ENCODE measurements at regions of chr3 and their contacts with region 1.

Region 1: DNA sequence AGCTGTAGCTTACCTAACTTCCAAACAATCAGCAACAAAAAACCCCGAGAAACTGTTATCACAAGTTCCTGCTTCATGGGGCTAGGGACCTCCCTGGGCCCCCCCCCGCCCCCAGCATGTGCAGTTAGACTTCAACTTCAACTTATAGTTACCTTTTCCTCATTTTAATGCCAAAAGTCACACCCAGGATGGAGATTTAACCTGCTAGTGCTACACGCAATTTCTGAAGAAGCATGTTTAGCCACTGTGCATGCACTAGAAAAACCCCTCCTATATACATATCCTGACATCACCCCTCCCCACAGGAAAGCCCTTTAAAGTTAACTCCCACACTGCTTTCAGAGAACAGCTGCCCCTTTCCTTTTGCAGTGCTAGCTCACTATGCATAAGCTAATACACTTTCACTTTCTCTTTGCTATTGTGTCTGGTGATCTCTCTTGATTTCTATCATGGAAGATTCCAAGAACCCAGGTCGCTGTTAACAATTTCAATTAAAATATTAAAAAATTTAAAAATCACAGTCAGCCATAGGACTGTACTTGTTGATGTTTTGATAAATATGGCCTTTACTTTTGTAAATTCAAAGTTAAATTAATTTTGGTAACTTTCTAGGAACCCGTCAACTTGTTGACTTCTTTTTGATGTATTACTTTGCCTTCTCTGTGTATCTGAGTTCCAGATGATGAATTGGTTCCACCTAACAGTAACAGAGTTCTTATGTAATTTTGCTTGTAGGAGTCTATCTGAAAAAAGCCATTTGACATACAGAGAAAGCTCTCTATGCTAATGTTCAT is 75.2 kb upstream of the ACAD9 start:
- DNase-seq: peak in 11 of 14 experiments; percentile 26 to 93 (median 44)
- ATAC-seq: peak; percentile 92
- H3K4me3 ChIP-seq: peak overlapping the region; percentile 44
- H3K4me3 Mint-ChIP-seq: peak overlapping the region; percentile 75
- H3K27ac ChIP-seq: peak overlapping the region; percentile 86 to 87
- H3K27ac Mint-ChIP-seq: peak overlapping the region; percentile 96
- H3K4me1 ChIP-seq: peaks cover 50% of the 10 kb centered on the region
- H3K4me1 Mint-ChIP-seq: peaks cover 81% of the 10 kb centered on the region
- H3K27me3 ChIP-seq: no peaks in the 10 kb centered on the region
- H3K27me3 Mint-ChIP-seq: no peaks in the 10 kb centered on the region
- CTCF ChIP-seq: no peak

Region 2: DNA sequence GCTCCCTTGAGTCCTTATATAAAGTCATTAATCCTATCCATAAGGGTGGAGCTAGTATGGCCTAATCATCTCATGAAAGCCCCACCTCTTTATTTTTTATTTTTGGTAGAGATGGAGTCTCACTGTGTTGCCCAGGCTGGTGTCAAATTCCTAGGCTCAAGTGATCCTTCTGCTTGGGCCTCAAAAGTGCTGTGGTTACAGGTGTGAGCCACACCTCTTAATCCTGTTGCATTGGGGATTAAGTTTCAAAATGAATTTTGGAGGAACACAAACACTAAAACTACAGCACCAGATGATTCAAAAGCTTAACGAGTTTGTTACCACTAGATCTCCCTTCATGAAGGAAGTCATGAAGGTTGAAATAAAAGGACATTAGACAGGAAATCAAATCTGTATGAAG is 50.5 kb before region 1 on chr3:
- CTCF ChIA-PET with region 1: no interaction called
- POLR2A ChIA-PET with region 1: no interaction called
- intact Hi-C with region 1: no loop called
- DNase-seq: no peak
- ATAC-seq: peak; percentile 21
- H3K4me3 ChIP-seq: no peak overlapping the region
- H3K4me3 Mint-ChIP-seq: peak overlapping the region; percentile 26
- H3K27ac ChIP-seq: no peak overlapping the region
- H3K27ac Mint-ChIP-seq: peak overlapping the region; percentile 55
- H3K4me1 ChIP-seq: peaks cover 21% of the 10 kb centered on the region
- H3K4me1 Mint-ChIP-seq: peaks cover 80% of the 10 kb centered on the region
- H3K27me3 ChIP-seq: no peaks in the 10 kb centered on the region
- H3K27me3 Mint-ChIP-seq: no peaks in the 10 kb centered on the region
- CTCF ChIP-seq: no peak

Region 3: DNA sequence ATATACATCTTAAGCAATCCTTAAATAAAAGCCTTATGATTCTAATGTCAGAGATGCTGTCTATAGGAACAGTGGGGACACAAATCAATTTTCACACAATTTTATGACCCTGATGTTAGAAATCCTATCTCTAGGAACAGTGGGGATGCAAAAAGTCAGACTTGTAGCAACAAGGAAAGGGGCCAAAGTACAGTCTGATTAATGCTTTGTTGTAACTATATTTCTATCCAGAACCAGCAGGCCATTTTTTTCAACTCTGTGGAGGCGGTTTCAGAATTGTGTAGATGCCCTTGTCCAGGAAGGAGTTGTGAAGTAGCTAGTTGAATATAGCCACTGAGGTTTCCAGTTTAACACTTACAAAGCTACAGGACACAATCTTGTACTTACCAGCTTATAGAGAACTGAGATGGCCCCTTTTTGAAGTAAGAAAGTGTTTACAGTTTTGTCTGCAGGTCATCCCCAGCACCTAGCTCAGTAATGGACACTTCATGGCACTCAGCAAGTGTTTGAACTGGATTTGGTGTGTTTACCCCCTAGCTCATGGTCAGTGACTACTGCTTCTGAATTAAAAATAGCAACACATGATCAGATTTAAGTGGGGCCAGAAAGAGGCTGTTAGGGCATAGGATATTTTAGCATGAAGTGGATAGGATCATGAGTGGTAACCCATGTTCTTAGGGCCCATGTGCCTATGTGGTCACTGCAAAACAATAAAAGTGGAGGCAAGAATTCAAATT is 23.9 kb before region 1 on chr3:
- CTCF ChIA-PET with region 1: no interaction called
- POLR2A ChIA-PET with region 1: interaction called, 6 read pairs
- intact Hi-C with region 1: loop called in 1 of 2 experiments (anchors 1 kb)
- DNase-seq: no peak
- ATAC-seq: no peak
- H3K4me3 ChIP-seq: no peak overlapping the region
- H3K4me3 Mint-ChIP-seq: no peak overlapping the region
- H3K27ac ChIP-seq: no peak overlapping the region
- H3K27ac Mint-ChIP-seq: peak overlapping the region; percentile 58
- H3K4me1 ChIP-seq: peaks cover 26% of the 10 kb centered on the region
- H3K4me1 Mint-ChIP-seq: peaks cover 86% of the 10 kb centered on the region
- H3K27me3 ChIP-seq: no peaks in the 10 kb centered on the region
- H3K27me3 Mint-ChIP-seq: no peaks in the 10 kb centered on the region
- CTCF ChIP-seq: no peak

Region 4: DNA sequence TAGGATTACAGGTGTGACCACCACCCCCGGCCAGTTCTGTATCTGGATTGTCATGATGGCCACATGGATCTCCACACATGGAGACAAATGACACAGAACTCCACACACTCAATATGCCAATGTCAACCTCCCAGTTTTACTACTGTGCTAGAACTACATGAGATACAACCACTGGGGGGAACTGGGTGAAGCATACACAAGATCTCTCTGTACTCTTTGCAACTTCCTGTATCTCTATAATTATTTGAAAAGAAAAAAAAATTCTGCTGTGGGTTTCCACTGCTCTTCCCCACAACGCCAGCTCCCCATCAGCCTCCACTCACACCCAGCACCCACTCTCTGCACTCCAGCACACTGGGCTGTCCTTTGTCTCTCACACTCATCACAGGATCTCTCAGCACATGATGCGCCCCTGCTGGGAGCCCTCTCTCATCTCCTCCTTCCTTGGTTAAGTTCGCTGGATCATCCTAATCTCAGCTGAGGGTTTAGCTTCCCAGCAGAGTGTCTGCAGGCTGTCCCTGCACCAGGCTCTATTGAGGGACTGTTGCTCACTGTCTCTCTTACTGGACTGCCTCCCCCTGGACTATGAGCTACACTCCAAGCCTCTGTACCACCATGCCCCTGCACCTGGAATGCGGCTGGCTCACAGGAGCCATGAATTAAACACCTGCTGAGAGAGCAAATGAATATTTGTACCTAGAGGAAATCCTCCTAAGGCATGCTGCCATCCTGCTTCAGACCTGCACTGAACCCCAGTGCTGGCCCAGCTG is 328.1 kb after region 1 on chr3:
- CTCF ChIA-PET with region 1: no interaction called
- POLR2A ChIA-PET with region 1: no interaction called
- intact Hi-C with region 1: no loop called
- DNase-seq: no peak
- ATAC-seq: peak; percentile 62
- H3K4me3 ChIP-seq: no peak overlapping the region
- H3K4me3 Mint-ChIP-seq: no peak overlapping the region
- H3K27ac ChIP-seq: no peak overlapping the region
- H3K27ac Mint-ChIP-seq: peak overlapping the region; percentile 43
- H3K4me1 ChIP-seq: peaks cover 3% of the 10 kb centered on the region
- H3K4me1 Mint-ChIP-seq: peaks cover 21% of the 10 kb centered on the region
- H3K27me3 ChIP-seq: no peaks in the 10 kb centered on the region
- H3K27me3 Mint-ChIP-seq: no peaks in the 10 kb centered on the region
- CTCF ChIP-seq: no peak